H1 (cell line): ENCODE measurements at regions of chr7 and their contacts with region 1.

Region 1: GRCh38 chr7:56079450-56080185 is 13.1 kb downstream of the PHKG1 start:
- DNase-seq: peak in 1 of 2 experiments; percentile 56
- H3K4me3 ChIP-seq: no peak overlapping the region
- H3K27ac ChIP-seq: no peak overlapping the region
- H3K4me1 ChIP-seq: no peaks in the 10 kb centered on the region
- H3K27me3 ChIP-seq: no peaks in the 10 kb centered on the region
- CTCF ChIP-seq: peak; percentile 25 to 57 (median 53)
- EP300 ChIP-seq: no peak
- POLR2A ChIP-seq: no peak
- RAD21 ChIP-seq: peak in 1 of 2 experiments; percentile 7; a peak in 2 of 4 replicates

Region 2: DNA sequence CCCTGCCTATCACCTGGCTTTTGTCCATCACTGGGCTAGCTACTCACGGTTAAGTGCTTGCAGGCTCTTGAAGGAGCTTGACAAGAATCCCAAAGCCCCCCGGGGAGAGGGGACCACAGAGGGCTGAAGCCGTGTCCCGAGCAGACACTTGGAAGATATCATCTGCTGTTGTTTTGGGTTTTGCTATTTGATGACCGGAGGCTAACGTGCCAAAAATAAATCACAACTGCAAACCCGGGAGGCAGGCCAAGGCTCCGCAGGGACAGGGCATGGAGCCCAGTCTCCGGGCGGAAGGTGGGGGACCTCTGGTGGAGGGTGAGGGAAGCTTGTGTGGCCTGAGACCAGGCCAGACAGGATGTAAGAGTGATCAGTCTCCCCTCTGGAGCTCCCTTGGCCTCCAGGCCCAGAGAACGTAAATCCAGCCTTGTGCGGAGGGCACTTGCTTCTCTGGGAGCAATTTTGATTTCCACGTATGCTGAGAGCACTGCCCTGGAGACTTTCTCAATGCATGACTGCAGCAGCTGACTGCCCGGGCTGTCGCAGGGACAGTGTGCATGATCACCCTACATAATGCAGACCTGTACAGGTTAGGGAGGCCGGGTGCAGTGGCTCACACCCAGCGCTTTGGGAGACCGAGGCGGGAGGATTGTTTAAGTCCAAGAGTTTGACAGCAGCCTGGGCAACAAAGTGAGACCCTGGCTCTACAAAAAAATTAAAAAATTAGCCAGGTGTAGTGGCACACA is 13.3 kb after region 1 on chr7 and contains the start of gene PHKG1:
- CTCF ChIA-PET with region 1: interaction called, 23 read pairs
- POLR2A ChIA-PET with region 1: interaction called, 18 read pairs
- DNase-seq: no peak
- H3K4me3 ChIP-seq: no peak within 1 kb of the TSS
- H3K27ac ChIP-seq: no peak within 1 kb of the TSS
- H3K4me1 ChIP-seq: no peaks in the 10 kb centered on the region
- H3K27me3 ChIP-seq: no peaks in the 10 kb centered on the region
- CTCF ChIP-seq: peak; percentile 44 to 60 (median 57)
- EP300 ChIP-seq: no peak
- POLR2A ChIP-seq: 0 out of 3 replicates have a peak, but pooled peaks of 1 of the 2 experiments have one; percentile 17
- RAD21 ChIP-seq: peak; percentile 55 to 65
- total RNA-seq, gene PHKG1: 0.61 TPM in 1 of 2 replicates, not detected in the other